ENCODE measurements at regions of chrX and their contacts with region 1.

Region 1: DNA sequence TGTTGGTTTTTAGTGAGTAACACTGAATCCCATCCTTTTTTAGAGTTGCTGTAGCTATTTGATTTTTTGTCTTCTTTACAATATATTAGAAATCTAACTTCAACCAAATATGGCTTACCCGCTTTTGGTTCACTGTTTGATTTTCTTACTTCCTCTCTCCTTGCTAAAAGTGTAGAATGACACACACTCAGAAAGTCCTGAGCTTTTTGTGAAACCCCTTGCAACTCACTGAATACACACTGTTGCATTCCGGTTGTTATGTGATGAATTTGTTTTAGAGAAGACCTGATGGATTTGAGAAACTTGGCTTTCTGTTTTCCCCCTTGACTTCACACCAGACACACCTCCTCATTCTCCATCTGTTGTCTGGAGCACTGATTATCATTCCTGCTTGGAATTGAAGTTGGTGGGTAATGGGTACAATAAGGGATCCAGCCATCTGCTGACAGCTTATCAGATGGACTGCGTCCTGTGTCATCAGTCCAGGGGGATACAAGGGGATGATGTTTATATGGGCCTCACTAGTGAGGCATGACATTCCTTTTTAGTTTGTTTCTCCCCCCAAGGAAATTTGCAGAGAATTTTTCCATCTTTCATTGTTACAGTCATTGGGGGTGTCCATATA is 5.2 kb downstream of the TMEM164 start:
- DNase-seq: no peak
- H3K4me3 ChIP-seq: no peak overlapping the region
- H3K27ac ChIP-seq: no peak overlapping the region
- H3K4me1 ChIP-seq: peaks cover 52% of the 10 kb centered on the region
- H3K27me3 ChIP-seq: no peaks in the 10 kb centered on the region
- CTCF ChIP-seq: no peak

Region 2: GRCh38 chrX:109270580-109271484 is 737.3 kb before region 1 on chrX:
- CTCF ChIA-PET with region 1: no interaction called
- POLR2A ChIA-PET with region 1: no interaction called
- intact Hi-C with region 1: no loop called
- DNase-seq: no peak
- H3K4me3 ChIP-seq: no peak overlapping the region
- H3K27ac ChIP-seq: no peak overlapping the region
- H3K4me1 ChIP-seq: no peaks in the 10 kb centered on the region
- H3K27me3 ChIP-seq: no peaks in the 10 kb centered on the region
- CTCF ChIP-seq: no peak

Region 3: GRCh38 chrX:110310896-110311295 is 302.8 kb after region 1 on chrX:
- CTCF ChIA-PET with region 1: no interaction called
- POLR2A ChIA-PET with region 1: interaction called, 10 read pairs
- intact Hi-C with region 1: no loop called
- DNase-seq: no peak
- H3K4me3 ChIP-seq: no peak overlapping the region
- H3K27ac ChIP-seq: no peak overlapping the region
- H3K4me1 ChIP-seq: peaks cover 35% of the 10 kb centered on the region
- H3K27me3 ChIP-seq: no peaks in the 10 kb centered on the region
- CTCF ChIP-seq: no peak

Measured in PC-9 (cell line).